Ascending aorta (tissue), 2 donors: ENCODE measurements at regions of chr11 and their contacts with region 1.

Region 1: DNA sequence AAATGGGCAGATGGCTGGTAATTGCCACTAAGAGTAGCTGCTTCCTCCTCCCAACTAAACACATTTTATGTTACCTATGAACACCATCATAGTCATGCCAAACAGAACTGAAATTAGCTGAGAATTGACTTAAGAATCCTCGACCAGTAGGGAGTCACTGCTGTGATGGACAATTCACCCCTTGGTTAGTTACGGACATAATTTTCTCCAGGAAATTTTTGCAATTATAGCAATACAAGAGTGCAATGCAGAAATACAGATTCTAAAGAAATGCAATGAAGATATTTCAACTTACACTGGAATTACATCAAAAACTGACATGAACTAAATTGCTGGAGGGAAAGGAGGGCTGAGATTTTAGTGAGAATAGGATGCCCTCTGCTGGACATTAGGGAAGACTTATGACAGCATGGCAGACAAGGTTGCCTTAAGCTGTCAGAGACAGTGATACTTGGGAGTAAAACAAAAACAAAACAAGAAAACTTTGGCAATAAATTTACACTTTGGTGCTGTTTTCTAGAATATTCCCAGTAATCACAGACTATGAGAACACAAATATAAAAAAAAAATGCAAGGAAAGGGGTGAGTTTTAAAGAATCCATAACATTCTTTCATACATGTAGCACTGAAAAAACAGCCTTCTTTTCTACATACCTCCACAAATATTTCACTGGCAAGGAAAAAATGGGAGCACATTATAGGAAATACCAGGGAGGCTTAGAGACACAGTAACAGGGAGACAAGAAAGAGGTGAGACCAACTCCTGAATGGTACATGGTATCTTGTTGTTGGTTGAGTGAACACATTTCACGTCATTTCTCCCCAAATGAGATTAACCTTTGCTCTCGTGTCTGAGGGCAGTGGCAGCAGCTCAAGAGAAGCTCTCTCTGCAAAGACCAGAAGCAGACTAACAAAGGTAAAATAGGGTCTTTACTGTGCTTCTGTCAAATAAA is 11.2 kb upstream of the PPP2R1B start:
- DNase-seq: no peak
- H3K4me3 ChIP-seq: no peak overlapping the region
- H3K27ac ChIP-seq: peak overlapping the region in 1 of 2 donors; percentile 16
- H3K4me1 ChIP-seq: peaks cover 0 to 9% of the 10 kb centered on the region in 2 donors
- H3K27me3 ChIP-seq: no peaks in the 10 kb centered on the region
- CTCF ChIP-seq: peak; percentile 69 to 76 (median 69)

Region 2: GRCh38 chr11:111565114-111565720 is 212.2 kb before region 1 on chr11:
- intact Hi-C with region 1: loop called (anchors 1 kb)
- DNase-seq: peak in 1 of 2 donors; percentile 85
- H3K4me3 ChIP-seq: no peak overlapping the region
- H3K27ac ChIP-seq: no peak overlapping the region
- H3K4me1 ChIP-seq: no peaks in the 10 kb centered on the region
- H3K27me3 ChIP-seq: no peaks in the 10 kb centered on the region
- CTCF ChIP-seq: peak; percentile 70 to 92 (median 90)

Region 3: DNA sequence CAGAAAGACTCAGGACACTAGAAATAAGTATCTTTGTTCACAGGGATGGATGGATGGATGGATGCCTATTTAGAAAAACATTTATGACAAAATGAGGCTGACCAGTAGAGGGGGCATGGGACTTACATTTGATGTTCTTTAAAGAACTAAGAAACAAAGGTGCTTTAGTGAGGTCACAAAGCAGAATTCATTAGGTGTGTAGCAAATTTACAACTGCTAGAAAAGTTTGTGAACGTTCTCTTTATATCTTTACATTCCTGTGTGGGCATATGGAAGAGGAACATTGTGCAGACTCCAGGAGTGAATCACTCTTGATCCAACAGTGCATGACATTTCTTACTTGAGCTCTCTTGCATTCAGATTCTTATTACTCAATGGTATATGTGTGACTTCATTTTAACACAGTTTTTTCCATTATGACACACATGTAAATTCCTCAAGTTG is 191.0 kb before region 1 on chr11:
- intact Hi-C with region 1: loop called (anchors 1 kb)
- DNase-seq: no peak
- H3K4me3 ChIP-seq: no peak overlapping the region
- H3K27ac ChIP-seq: no peak overlapping the region
- H3K4me1 ChIP-seq: no peaks in the 10 kb centered on the region
- H3K27me3 ChIP-seq: no peaks in the 10 kb centered on the region
- CTCF ChIP-seq: peak; percentile 37 to 65 (median 50)

Region 4: GRCh38 chr11:111601979-111602864 is 175.1 kb before region 1 on chr11 and contains the start of gene SIK2:
- intact Hi-C with region 1: loop called (anchors 1 kb)
- DNase-seq: peak; percentile 73 to 96
- H3K4me3 ChIP-seq: peak within 1 kb of the TSS; percentile 84 to 98
- H3K27ac ChIP-seq: peak within 1 kb of the TSS; percentile 90 to 96
- H3K4me1 ChIP-seq: peaks cover 0 to 8% of the 10 kb centered on the region in 2 donors
- H3K27me3 ChIP-seq: no peaks in the 10 kb centered on the region
- CTCF ChIP-seq: peak; percentile 88 to 98 (median 93)
- total RNA-seq, gene SIK2: 8.2 TPM

Region 5: DNA sequence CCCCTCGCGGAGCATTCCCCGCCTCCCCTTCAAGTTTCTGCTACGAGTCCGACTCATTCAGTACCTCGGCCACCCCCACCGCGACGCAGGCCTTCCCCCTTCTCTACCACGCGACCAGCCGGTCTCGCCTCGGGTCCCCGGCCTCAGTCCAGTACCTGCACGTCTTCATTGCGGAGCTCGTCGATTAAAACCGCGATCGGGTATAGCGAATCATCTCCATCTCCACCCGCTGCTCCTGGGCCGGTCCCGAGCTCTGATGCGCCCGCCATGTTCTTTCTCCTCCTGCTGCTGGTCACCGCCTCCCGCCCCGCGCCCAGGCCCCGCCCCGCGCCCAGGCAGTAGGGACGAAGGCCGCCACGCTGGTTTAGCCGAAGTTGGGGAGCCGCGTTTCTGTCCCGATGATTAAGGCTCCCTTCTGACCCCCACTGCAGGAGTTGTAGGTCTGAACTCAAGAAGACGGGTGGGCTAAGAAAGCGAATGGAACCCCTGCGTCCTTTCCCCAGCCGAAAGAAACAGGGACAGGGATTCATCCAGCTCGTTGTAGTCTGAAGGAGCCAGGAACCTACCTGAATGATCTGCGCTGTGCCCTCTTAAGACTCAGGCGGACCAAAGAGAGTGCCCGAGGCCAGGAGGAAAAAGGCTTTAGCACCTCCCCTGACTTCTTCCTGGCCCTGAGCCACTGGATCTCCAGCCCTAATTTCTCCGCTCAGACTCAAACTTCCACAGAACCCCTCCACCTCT is 11.1 kb before region 1 on chr11 and contains the start of gene PPP2R1B:
- intact Hi-C with region 1: loop called (anchors 1 kb)
- DNase-seq: peak in 1 of 2 donors; percentile 80
- H3K4me3 ChIP-seq: peak within 1 kb of the TSS; percentile 85 to 98
- H3K27ac ChIP-seq: peak within 1 kb of the TSS; percentile 89
- H3K4me1 ChIP-seq: peaks cover 6 to 17% of the 10 kb centered on the region in 2 donors
- H3K27me3 ChIP-seq: no peaks in the 10 kb centered on the region
- CTCF ChIP-seq: no peak
- total RNA-seq, gene PPP2R1B: 7.7 TPM

Region 6: GRCh38 chr11:111841370-111842053 is 64.1 kb after region 1 on chr11:
- intact Hi-C with region 1: loop called (anchors 5 kb)
- DNase-seq: peak; percentile 54 to 94
- H3K4me3 ChIP-seq: no peak overlapping the region
- H3K27ac ChIP-seq: no peak overlapping the region
- H3K4me1 ChIP-seq: peaks cover 0 to 2% of the 10 kb centered on the region in 2 donors
- H3K27me3 ChIP-seq: no peaks in the 10 kb centered on the region
- CTCF ChIP-seq: peak; percentile 78 to 85 (median 85)

Region 7: GRCh38 chr11:112219476-112220232 is 442.3 kb after region 1 on chr11:
- intact Hi-C with region 1: loop called (anchors 10 kb)
- DNase-seq: peak in 1 of 2 donors; percentile 70
- H3K4me3 ChIP-seq: no peak overlapping the region
- H3K27ac ChIP-seq: no peak overlapping the region
- H3K4me1 ChIP-seq: peaks cover 0 to 2% of the 10 kb centered on the region in 2 donors
- H3K27me3 ChIP-seq: no peaks in the 10 kb centered on the region
- CTCF ChIP-seq: peak; percentile 73 to 85 (median 80)